Astrocyte of the cerebellum (primary cell): ENCODE measurements at regions of chr9 and their contacts with region 1.

Region 1: DNA sequence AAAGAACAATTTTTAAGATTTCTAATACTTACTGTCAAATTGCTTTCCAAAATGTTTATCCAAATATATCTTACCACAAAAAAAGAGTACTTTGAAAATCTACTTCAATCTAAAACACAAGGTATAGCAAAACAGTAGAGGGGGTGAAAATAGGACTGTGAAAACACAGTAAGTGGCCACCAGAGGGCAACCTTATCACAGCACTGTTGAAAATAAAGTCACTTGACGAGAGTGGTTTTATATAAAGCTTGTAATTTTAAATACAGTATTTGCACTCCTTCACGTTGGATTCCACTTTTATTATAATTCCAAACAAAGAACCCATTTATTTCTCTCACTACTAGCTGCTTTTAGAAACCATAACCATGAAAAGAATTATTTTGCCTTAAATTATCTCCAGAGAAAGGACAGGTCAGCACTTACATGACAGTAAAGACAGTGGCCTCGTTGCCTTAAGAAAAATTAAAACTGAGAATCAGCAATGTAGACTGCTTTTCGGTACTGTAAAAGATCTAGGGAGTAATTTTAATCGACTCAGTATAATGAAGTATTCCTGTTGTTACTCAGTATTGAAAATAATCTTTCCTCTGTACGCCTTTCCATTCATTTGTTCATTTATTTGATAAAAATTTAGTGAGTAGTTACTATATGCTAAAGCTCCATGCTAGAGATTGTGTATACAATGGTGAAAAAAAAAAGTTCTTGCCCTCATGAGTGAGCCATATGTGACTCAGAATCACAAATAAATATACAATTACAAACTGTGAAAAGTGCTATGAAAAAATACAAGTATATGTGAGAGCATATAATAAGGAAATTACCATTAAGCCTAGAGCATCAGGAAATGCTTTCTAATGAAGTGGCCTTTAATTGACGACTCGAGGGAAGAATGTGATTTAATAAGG is 40.0 kb upstream of the CDK5RAP2 start:
- DNase-seq: peak; percentile 65
- H3K4me3 ChIP-seq: no peak overlapping the region
- CTCF ChIP-seq: peak; percentile 74

Region 2: DNA sequence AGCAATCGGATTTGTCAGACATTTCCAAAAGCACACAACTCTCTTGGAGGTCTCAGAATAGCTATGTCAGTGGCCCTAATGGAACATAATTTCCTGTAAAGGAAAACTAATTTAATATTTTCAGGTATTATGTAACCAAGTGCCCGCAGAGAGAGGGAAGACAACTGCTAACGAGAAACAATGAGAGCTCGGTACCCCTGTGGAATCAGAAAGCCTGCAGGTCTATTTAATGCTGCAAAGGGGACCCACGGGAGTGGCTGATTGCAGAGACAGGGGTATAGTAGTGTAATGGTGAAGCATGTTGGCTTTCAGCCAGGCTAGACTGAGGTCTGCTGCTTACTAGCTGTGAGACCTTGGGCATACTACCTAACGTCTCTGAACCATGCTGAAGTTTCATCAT is 742.7 kb before region 1 on chr9:
- in situ Hi-C with region 1: no loop called
- DNase-seq: no peak
- H3K4me3 ChIP-seq: no peak overlapping the region
- CTCF ChIP-seq: no peak

Region 3: DNA sequence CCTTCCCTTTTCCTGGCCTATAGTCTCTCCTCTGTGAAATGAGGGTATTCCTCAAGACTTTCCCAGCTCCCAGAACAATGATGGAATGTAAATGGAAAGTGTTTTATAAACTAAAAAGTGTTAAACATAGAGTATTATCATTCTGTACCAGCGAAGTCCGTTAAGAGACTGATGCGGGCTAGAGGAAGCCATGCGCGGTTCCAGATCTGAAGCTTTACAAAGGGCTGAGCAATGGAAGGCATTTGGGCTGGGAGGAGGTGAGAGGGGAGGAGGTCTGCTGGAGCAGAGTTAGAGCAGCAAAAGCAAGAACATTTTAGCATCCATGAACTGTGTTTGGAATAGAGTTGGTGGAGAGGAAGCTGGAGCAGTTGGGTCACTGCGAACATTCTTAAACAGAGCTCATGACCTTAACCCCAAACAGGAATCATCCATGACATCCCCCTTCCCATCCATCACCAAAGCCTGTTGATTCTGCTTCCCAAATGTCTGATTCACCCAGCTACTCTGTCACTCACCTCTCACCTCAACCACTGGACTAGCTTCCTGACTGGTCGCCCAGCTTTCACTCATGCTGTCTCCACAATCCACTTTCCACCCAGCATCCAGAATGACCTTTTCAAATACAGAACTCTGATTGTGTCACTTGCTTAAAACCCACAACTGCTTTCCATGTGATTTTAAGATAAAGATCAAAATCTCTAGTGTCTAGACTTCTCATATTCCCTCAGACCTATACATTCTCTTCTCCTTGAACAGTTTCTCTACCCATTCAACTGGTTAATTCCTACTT is 77.1 kb before region 1 on chr9:
- in situ Hi-C with region 1: loop called (anchors 5 kb)
- DNase-seq: no peak
- H3K4me3 ChIP-seq: no peak overlapping the region
- CTCF ChIP-seq: no peak